Mammary epithelial cell (primary cell): ENCODE measurements at regions of chr10 and their contacts with region 1.

Region 1: GRCh38 chr10:85152496-85152895 is 824.1 kb downstream of the CCSER2 start:
- DNase-seq: no peak
- H3K4me3 ChIP-seq: no peak overlapping the region
- H3K27ac ChIP-seq: no peak overlapping the region
- H3K4me1 ChIP-seq: no peaks in the 10 kb centered on the region
- H3K27me3 ChIP-seq: no peaks in the 10 kb centered on the region
- CTCF ChIP-seq: no peak

Region 2: GRCh38 chr10:85124603-85125051 is 27.9 kb before region 1 on chr10:
- CTCF ChIA-PET with region 1: no interaction called
- dilution Hi-C with region 1: no loop called
- in situ Hi-C with region 1: no loop called
- intact Hi-C with region 1: no loop called
- DNase-seq: no peak
- H3K4me3 ChIP-seq: no peak overlapping the region
- H3K27ac ChIP-seq: no peak overlapping the region
- H3K4me1 ChIP-seq: no peaks in the 10 kb centered on the region
- H3K27me3 ChIP-seq: no peaks in the 10 kb centered on the region
- CTCF ChIP-seq: no peak

Region 3: GRCh38 chr10:85137253-85137652 is 15.2 kb before region 1 on chr10:
- CTCF ChIA-PET with region 1: no interaction called
- dilution Hi-C with region 1: no loop called
- in situ Hi-C with region 1: no loop called
- intact Hi-C with region 1: loop called (anchors 2 kb)
- DNase-seq: no peak
- H3K4me3 ChIP-seq: no peak overlapping the region
- H3K27ac ChIP-seq: no peak overlapping the region
- H3K4me1 ChIP-seq: no peaks in the 10 kb centered on the region
- H3K27me3 ChIP-seq: no peaks in the 10 kb centered on the region
- CTCF ChIP-seq: no peak

Region 4: GRCh38 chr10:85594239-85594638 is 441.7 kb after region 1 on chr10:
- CTCF ChIA-PET with region 1: no interaction called
- dilution Hi-C with region 1: no loop called
- in situ Hi-C with region 1: no loop called
- intact Hi-C with region 1: no loop called
- DNase-seq: no peak
- H3K4me3 ChIP-seq: no peak overlapping the region
- H3K27ac ChIP-seq: no peak overlapping the region
- H3K4me1 ChIP-seq: no peaks in the 10 kb centered on the region
- H3K27me3 ChIP-seq: no peaks in the 10 kb centered on the region
- CTCF ChIP-seq: no peak

Region 5: GRCh38 chr10:85864173-85864549 is 711.7 kb after region 1 on chr10:
- CTCF ChIA-PET with region 1: no interaction called
- dilution Hi-C with region 1: no loop called
- in situ Hi-C with region 1: no loop called
- intact Hi-C with region 1: no loop called
- DNase-seq: no peak
- H3K4me3 ChIP-seq: no peak overlapping the region
- H3K27ac ChIP-seq: no peak overlapping the region
- H3K4me1 ChIP-seq: no peaks in the 10 kb centered on the region
- H3K27me3 ChIP-seq: no peaks in the 10 kb centered on the region
- CTCF ChIP-seq: no peak